Natural killer cell (primary cell): ENCODE measurements at regions of chr1 and their contacts with region 1.

Region 1: DNA sequence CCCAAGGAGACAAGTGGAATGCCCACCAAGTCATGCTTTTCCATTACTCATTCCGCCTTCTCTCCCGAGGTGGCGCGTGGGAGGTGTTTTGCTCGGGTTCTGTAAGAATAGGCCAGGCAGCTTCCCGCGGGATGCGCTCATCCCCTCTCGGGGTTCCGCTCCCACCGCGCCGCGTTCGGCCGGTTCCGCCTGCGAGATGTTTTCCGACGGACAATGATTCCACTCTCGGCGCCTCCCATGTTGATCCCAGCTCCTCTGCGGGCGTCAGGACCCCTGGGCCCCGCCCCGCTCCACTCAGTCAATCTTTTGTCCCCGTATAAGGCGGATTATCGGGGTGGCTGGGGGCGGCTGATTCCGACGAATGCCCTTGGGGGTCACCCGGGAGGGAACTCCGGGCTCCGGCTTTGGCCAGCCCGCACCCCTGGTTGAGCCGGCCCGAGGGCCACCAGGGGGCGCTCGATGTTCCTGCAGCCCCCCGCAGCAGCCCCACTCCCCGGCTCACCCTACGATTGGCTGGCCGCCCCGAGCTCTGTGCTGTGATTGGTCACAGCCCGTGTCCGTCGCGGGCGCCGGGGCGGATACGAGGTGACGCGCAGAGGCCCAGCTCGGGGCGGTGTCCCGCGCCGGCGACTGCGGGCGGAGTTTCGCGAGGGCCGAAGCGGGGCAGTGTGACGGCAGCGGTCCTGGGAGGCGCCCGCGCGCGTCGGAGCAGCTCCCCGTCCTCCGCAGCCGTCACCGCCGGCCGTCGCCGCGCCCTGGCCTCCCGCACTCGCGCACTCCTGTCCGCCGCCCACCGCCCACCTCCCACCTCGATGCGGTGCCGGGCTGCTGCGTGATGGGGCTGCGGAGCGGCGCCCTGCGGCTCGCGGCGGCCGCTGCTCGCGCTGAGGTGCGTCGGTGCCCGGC is at the start of gene KIF1B:
- DNase-seq: peak; percentile 97
- ATAC-seq: peak; percentile 98 to 99 (median 99)
- H3K4me3 ChIP-seq: peak within 1 kb of the TSS; percentile 72
- H3K4me3 Mint-ChIP-seq: peak within 1 kb of the TSS; percentile 92
- H3K27ac ChIP-seq: peak within 1 kb of the TSS; percentile 46
- H3K27ac Mint-ChIP-seq: peak within 1 kb of the TSS; percentile 78 to 94
- H3K4me1 ChIP-seq: peaks cover 15% of the 10 kb centered on the region
- H3K4me1 Mint-ChIP-seq: peaks cover 20 to 26% of the 10 kb centered on the region in 2 donors
- H3K27me3 ChIP-seq: peaks cover 4% of the 10 kb centered on the region
- H3K27me3 Mint-ChIP-seq: no peaks in the 10 kb centered on the region
- CTCF ChIP-seq: peak; percentile 96
- total RNA-seq, gene KIF1B: 15.2 to 22.0 (median 16.3) TPM

Region 2: DNA sequence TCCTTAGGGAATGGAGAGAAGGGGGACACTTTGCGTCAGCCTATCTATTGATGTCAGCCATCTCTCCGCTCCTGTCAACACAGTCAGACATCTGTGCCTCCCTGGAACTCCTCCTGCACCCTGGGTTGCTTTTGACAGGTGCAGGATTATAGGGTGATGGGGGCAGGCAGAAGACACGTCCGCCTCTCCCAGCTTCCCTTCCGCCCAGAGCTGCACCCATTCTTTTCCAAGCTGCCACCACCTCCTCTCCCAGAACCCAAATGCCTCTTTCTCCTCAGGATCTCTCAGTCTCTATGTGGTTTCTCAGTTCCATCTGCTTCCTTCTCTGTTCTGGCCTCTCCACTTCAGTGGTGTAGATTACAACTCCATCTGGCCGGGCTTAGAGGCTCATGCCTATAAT is 16.9 kb before region 1 on chr1:
- intact Hi-C with region 1: loop called (anchors 2 kb)
- DNase-seq: no peak
- ATAC-seq: no peak
- H3K4me3 ChIP-seq: no peak overlapping the region
- H3K4me3 Mint-ChIP-seq: no peak overlapping the region
- H3K27ac ChIP-seq: no peak overlapping the region
- H3K27ac Mint-ChIP-seq: no peak overlapping the region
- H3K4me1 ChIP-seq: no peaks in the 10 kb centered on the region
- H3K4me1 Mint-ChIP-seq: no peaks in the 10 kb centered on the region
- H3K27me3 ChIP-seq: no peaks in the 10 kb centered on the region
- H3K27me3 Mint-ChIP-seq: peaks cover 0 to 8% of the 10 kb centered on the region in 2 donors
- CTCF ChIP-seq: no peak

Region 3: GRCh38 chr1:10338047-10338446 is 127.9 kb after region 1 on chr1:
- intact Hi-C with region 1: loop called (anchors 1 kb)
- DNase-seq: peak; percentile 24 to 54
- ATAC-seq: peak; percentile 76 to 91 (median 88)
- H3K4me3 ChIP-seq: no peak overlapping the region
- H3K4me3 Mint-ChIP-seq: no peak overlapping the region
- H3K27ac ChIP-seq: no peak overlapping the region
- H3K27ac Mint-ChIP-seq: no peak overlapping the region
- H3K4me1 ChIP-seq: no peaks in the 10 kb centered on the region
- H3K4me1 Mint-ChIP-seq: no peaks in the 10 kb centered on the region
- H3K27me3 ChIP-seq: no peaks in the 10 kb centered on the region
- H3K27me3 Mint-ChIP-seq: no peaks in the 10 kb centered on the region
- CTCF ChIP-seq: peak; percentile 65